Mammary epithelial cell (primary cell): ENCODE measurements at regions of chr7 and their contacts with region 1.

Region 1: GRCh38 chr7:129176916-129177710 is 11.3 kb upstream of the SMO start:
- DNase-seq: no peak
- H3K4me3 ChIP-seq: no peak overlapping the region
- H3K27ac ChIP-seq: no peak overlapping the region
- H3K4me1 ChIP-seq: no peaks in the 10 kb centered on the region
- H3K27me3 ChIP-seq: no peaks in the 10 kb centered on the region
- CTCF ChIP-seq: no peak

Region 2: DNA sequence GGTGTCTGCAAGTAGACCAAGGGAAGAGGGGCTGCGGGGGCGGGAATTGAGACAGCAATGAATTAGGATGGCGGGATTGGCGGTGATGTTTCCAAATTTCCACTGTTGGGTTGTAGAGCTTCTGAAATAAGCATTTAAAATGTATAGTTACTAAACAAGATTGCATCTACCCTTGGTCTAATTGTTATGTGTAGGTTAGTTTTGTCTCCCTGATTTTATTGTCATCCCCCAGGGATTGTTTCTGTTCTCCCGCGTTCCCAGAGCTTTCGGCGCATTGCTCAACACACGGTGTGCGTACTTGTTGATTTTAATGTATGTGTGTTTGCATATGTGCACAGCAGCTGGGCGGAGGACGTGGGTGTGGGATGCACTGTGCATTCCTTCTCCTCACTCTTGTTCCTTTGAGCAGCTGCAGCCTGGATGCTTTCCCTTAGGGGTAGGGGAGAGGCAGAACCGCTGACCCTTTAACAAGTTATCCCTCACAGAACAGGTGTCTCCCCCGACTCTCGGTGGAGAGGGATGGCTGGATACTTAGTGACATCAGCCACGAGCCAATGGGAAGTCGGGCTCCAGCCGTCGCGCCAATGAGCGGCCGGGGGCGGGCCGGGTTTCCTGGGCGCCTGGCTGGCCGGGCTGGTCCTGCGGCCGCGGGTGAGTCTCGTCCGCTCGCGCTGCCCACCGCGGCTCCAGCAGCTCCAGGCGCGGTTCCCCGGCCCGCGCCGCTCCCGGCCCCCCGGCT is 32.8 kb before region 1 on chr7 and contains the start of gene TSPAN33:
- CTCF ChIA-PET with region 1: interaction called, 18 read pairs
- dilution Hi-C with region 1: no loop called
- in situ Hi-C with region 1: no loop called
- intact Hi-C with region 1: no loop called
- DNase-seq: peak; percentile 71
- H3K4me3 ChIP-seq: peak within 1 kb of the TSS; percentile 53 to 55 (median 54)
- H3K27ac ChIP-seq: no peak within 1 kb of the TSS
- H3K4me1 ChIP-seq: peaks cover 10% of the 10 kb centered on the region
- H3K27me3 ChIP-seq: no peaks in the 10 kb centered on the region
- CTCF ChIP-seq: no peak
- total RNA-seq, gene TSPAN33: 1.7 to 1.8 TPM

Region 3: DNA sequence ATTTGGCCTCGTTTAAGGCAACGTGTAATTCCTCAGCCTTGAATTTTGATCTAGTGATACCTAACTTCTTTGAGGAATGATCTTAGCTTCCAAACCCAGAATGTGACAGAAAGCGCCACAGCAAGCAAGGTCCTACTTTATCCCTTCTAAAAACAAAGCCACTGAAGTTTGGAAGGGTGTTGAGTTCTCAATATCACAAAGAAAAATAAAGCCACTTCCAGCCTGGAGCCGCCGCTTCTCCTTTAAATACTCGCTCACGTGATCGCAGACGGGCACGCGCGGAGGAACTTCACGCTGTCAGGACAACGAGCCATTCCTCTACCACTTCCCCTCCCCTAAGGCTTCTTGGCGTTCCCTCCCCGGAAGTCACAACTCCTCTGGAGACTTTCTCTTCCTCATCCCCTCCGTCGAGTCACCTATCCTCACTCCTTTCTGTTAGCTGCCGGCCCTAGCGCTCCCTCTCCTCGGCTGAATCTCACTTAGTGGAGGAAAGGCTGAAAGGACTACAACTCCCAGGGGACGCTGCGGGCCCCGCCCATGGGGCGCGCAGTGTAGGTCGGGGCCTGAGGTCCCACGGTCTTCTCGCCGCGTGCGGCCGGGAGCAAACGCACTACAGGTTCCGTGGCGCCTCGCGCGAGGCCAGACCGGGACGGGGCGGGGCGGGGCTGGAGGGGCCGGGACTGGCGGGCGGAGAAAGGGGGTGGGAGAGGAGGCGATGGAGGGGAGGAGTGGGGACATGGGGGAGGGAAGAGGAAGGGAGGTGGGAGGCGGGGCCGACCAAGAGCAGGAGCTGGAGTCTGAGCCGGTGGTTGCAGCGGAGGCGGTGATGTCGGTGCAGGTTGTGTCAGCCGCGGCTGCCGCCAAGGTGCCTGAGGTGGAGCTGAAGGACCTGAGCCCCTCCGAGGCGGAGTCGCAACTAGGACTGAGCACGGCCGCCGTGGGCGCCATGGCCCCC is 47.4 kb after region 1 on chr7 and contains the start of gene AHCYL2:
- CTCF ChIA-PET with region 1: no interaction called
- dilution Hi-C with region 1: no loop called
- in situ Hi-C with region 1: no loop called
- intact Hi-C with region 1: no loop called
- DNase-seq: peak; percentile 98
- H3K4me3 ChIP-seq: peak within 1 kb of the TSS; percentile 75 to 82 (median 78)
- H3K27ac ChIP-seq: peak within 1 kb of the TSS; percentile 77
- H3K4me1 ChIP-seq: peaks cover 15% of the 10 kb centered on the region
- H3K27me3 ChIP-seq: no peaks in the 10 kb centered on the region
- CTCF ChIP-seq: no peak
- total RNA-seq, gene AHCYL2: 19.3 to 26.6 TPM

Region 4: DNA sequence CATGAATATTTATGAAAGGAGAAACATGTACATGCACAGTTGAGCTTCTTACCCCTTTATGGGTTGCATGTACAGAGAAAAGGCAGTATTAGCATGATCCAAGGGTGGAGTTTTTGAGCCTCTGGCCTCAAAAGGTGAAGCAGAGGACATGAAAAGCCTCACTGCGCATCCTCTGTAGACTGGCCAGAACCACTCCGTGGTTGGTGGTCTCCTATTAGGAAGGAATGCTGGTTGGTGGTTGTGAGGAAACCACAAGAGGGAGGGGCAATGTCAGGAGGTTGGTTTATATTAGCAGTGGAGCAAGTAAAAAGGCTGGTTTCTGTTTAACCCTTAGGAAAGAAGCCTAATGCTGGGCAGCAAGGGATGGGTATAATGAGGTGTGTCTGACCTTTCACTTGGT is 85.2 kb after region 1 on chr7:
- CTCF ChIA-PET with region 1: no interaction called
- dilution Hi-C with region 1: no loop called
- in situ Hi-C with region 1: no loop called
- intact Hi-C with region 1: no loop called
- DNase-seq: no peak
- H3K4me3 ChIP-seq: no peak overlapping the region
- H3K27ac ChIP-seq: no peak overlapping the region
- H3K4me1 ChIP-seq: peaks cover 15% of the 10 kb centered on the region
- H3K27me3 ChIP-seq: no peaks in the 10 kb centered on the region
- CTCF ChIP-seq: no peak